ENCODE measurements at regions of chr6 and their contacts with region 1.

Region 1: DNA sequence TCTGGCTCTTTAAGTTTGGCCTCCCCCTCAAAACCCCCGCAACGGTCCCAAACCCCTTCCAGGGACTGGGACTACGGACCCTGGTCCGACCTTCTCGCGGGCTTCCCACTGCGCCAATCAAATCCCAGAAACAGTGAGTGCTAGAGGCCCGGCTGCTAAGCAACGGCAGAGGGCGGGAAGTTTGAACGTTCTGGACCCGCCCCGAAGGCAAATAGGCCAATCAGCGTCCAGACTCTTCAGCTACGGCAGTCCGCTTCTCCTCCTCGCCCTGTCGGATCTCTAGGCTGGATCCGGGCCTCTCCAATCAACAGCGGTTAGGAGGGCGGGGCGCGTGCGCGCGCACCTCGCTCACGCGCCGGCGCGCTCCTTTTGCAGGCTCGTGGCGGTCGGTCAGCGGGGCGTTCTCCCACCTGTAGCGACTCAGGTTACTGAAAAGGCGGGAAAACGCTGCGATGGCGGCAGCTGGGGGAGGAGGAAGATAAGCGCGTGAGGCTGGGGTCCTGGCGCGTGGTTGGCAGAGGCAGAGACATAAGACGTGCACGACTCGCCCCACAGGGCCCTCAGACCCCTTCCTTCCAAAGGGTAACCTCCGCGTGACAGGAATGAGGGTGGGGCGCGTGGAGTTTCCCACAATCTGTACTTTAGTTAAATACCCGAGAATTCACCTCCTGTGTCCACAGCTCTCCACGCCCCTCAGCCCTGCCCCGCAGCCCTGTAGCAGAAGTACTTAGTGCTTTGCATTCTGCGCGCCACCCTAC is at the start of gene MSH5:
- DNase-seq: peak; percentile 100
- ATAC-seq: peak; percentile 74
- H3K4me3 ChIP-seq: peak within 1 kb of the TSS; percentile 44 to 92 (median 92)
- H3K27ac ChIP-seq: peak within 1 kb of the TSS; percentile 99
- H3K4me1 ChIP-seq: peaks cover 50% of the 10 kb centered on the region
- H3K27me3 ChIP-seq: no peaks in the 10 kb centered on the region; a peak in 1 of 5 replicates
- CTCF ChIP-seq: no peak
- EP300 ChIP-seq: no peak; a peak in 1 of 4 replicates
- POLR2A ChIP-seq: peak in 1 of 2 experiments; percentile 45; a peak in 2 of 4 replicates
- RAD21 ChIP-seq: peak; percentile 51
- total RNA-seq, gene MSH5: 2.5 and 10.2 TPM in 2 replicates

Region 2: GRCh38 chr6:31304683-31305082 is 435.1 kb before region 1 on chr6:
- CTCF ChIA-PET with region 1: no interaction called
- POLR2A ChIA-PET with region 1: no interaction called
- in situ Hi-C with region 1: no loop called
- intact Hi-C with region 1: no loop called
- DNase-seq: no peak
- ATAC-seq: no peak
- H3K4me3 ChIP-seq: no peak overlapping the region
- H3K27ac ChIP-seq: no peak overlapping the region
- H3K4me1 ChIP-seq: peaks cover 11% of the 10 kb centered on the region
- H3K27me3 ChIP-seq: peaks cover 1 to 30% of the 10 kb centered on the region in 2 experiments; a peak in 4 of 5 replicates
- CTCF ChIP-seq: no peak
- EP300 ChIP-seq: no peak
- POLR2A ChIP-seq: no peak
- RAD21 ChIP-seq: no peak

Region 3: GRCh38 chr6:31660381-31661261 is 79.2 kb before region 1 on chr6 and contains the start of gene C6orf47:
- CTCF ChIA-PET with region 1: no interaction called
- POLR2A ChIA-PET with region 1: interaction called, 67 read pairs
- in situ Hi-C with region 1: no loop called
- intact Hi-C with region 1: loop called (anchors 1 kb)
- DNase-seq: peak; percentile 79
- ATAC-seq: peak; percentile 66
- H3K4me3 ChIP-seq: peak within 1 kb of the TSS; percentile 56 to 78 (median 68)
- H3K27ac ChIP-seq: peak within 1 kb of the TSS; percentile 73
- H3K4me1 ChIP-seq: peaks cover 86% of the 10 kb centered on the region
- H3K27me3 ChIP-seq: no peaks in the 10 kb centered on the region; a peak in 1 of 5 replicates
- CTCF ChIP-seq: no peak; the same call in 1 of the 2 replicates
- EP300 ChIP-seq: no peak
- POLR2A ChIP-seq: peak in 1 of 2 experiments; percentile 59; a peak in 1 of 4 replicates
- RAD21 ChIP-seq: peak; percentile 36; the same call in 1 of the 2 replicates
- total RNA-seq, gene C6orf47: 15.5 and 18.1 TPM in 2 replicates

Region 4: GRCh38 chr6:31712296-31712695 is 27.5 kb before region 1 on chr6:
- CTCF ChIA-PET with region 1: no interaction called
- POLR2A ChIA-PET with region 1: interaction called, 11 read pairs
- in situ Hi-C with region 1: no loop called
- intact Hi-C with region 1: no loop called
- DNase-seq: no peak
- ATAC-seq: no peak; the same call in 2 of the 3 replicates
- H3K4me3 ChIP-seq: no peak overlapping the region
- H3K27ac ChIP-seq: no peak overlapping the region
- H3K4me1 ChIP-seq: peaks cover 27% of the 10 kb centered on the region
- H3K27me3 ChIP-seq: peaks cover 11 to 47% of the 10 kb centered on the region in 2 experiments; a peak in 4 of 5 replicates
- CTCF ChIP-seq: no peak
- EP300 ChIP-seq: no peak
- POLR2A ChIP-seq: no peak
- RAD21 ChIP-seq: no peak

Region 5: GRCh38 chr6:31763619-31763940 is 23.8 kb after region 1 on chr6:
- CTCF ChIA-PET with region 1: no interaction called
- POLR2A ChIA-PET with region 1: interaction called, 279 read pairs
- in situ Hi-C with region 1: no loop called
- intact Hi-C with region 1: no loop called
- DNase-seq: peak; percentile 68
- ATAC-seq: peak; percentile 10
- H3K4me3 ChIP-seq: no peak overlapping the region
- H3K27ac ChIP-seq: no peak overlapping the region
- H3K4me1 ChIP-seq: peaks cover 47% of the 10 kb centered on the region
- H3K27me3 ChIP-seq: no peaks in the 10 kb centered on the region
- CTCF ChIP-seq: peak; percentile 77
- EP300 ChIP-seq: no peak
- POLR2A ChIP-seq: no peak
- RAD21 ChIP-seq: no peak

Region 6: DNA sequence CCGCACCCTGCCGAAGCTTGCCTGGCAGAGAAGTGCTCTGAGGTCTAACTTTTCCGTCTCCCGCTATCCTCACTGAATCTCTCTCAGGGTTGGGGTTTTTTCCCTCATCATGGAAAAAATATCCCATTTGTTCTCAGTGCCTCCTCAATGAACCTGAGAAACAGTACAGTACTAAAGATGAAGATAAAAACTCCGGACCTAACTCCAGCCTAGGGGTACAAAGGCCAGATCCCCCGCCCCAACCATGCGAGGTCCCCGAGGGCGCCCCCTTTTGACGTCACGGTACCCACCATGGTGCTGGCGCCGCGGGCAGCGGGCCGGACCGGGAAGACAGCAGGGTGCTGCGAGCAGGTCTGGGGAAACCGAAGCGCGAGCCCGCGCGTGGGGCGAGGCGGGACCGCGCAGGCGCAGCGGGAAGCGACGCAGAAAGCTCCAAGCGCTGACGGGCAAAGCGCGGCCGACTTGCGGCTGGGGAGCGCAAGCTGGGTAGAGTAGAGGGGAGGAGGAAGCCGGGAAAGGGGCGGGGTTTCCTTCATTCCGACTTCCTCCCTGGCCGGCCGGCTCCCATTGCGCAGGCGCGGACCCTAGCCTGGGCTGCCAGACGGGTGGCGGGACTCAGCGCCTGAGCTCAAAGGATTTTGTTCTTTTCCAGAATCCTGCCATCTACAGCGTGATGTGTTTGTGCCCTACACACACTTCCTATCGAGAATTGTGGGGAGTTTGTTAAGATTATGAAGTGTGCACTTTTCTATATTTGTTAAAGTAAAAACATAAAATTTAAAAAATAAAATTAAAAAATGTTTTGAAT is 66.9 kb after region 1 on chr6 and contains the start of gene LSM2:
- CTCF ChIA-PET with region 1: no interaction called
- POLR2A ChIA-PET with region 1: interaction called, 53 read pairs
- in situ Hi-C with region 1: no loop called
- intact Hi-C with region 1: loop called (anchors 5 kb)
- DNase-seq: peak; percentile 96
- ATAC-seq: peak; percentile 92
- H3K4me3 ChIP-seq: peak within 1 kb of the TSS; percentile 82 to 90 (median 84)
- H3K27ac ChIP-seq: peak within 1 kb of the TSS; percentile 94
- H3K4me1 ChIP-seq: peaks cover 37% of the 10 kb centered on the region
- H3K27me3 ChIP-seq: no peaks in the 10 kb centered on the region
- CTCF ChIP-seq: peak; percentile 89
- EP300 ChIP-seq: peak in 1 of 2 experiments; percentile 43; a peak in 2 of 4 replicates
- POLR2A ChIP-seq: peak; percentile 75 to 89
- RAD21 ChIP-seq: peak; percentile 69
- total RNA-seq, gene LSM2: 90.5 and 93.7 TPM in 2 replicates

Region 7: DNA sequence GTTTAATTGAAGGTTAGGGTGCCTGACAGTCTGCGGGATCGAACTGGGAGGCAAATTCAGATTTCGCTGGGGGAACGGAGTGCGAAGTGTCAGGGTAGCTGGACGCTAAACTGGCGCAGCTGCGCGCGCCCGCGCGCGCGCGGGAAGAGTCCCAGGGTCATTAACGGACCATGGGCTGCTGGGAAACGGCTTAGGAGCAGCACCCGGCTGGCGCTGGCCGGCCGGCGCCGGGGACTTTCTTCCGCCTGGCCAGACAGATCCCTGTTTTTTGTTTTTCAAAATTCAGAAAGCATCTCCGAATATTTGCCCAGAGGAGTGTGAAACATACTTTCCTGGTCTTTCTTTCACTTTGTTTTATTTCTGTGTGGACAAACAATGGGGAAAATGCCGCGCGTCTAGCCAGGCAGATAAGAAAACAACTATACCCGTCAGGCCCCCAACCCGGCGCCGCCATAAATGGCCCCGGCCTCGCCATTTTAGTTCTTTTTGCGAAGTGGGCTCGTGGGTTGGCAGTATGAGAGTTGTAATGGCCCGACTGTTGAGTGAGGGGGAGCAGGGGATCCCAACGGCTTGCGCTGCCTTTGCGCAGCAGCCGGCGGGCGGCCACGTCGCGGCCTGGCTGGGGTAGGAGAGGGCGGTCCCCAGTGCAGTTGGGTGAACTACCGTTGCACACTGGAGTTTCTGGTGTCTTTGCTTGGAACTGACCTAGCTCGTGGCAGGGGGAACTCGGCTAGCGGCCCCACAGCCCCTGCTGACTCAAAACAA is 94.8 kb after region 1 on chr6:
- CTCF ChIA-PET with region 1: no interaction called
- POLR2A ChIA-PET with region 1: interaction called, 60 read pairs
- in situ Hi-C with region 1: no loop called
- intact Hi-C with region 1: loop called (anchors 2 kb)
- DNase-seq: peak; percentile 92
- ATAC-seq: peak; percentile 85
- H3K4me3 ChIP-seq: peak overlapping the region; percentile 75 to 98 (median 93)
- H3K27ac ChIP-seq: peak overlapping the region; percentile 93
- H3K4me1 ChIP-seq: peaks cover 56% of the 10 kb centered on the region
- H3K27me3 ChIP-seq: peaks cover 0 to 2% of the 10 kb centered on the region in 2 experiments; a peak in 1 of 5 replicates
- CTCF ChIP-seq: no peak
- EP300 ChIP-seq: no peak
- POLR2A ChIP-seq: peak; percentile 97 to 99
- RAD21 ChIP-seq: peak; percentile 28; the same call in 1 of the 2 replicates

Region 8: GRCh38 chr6:31945507-31946369 is 205.9 kb after region 1 on chr6 and contains the start of gene CFB:
- CTCF ChIA-PET with region 1: no interaction called
- POLR2A ChIA-PET with region 1: interaction called, 21 read pairs
- in situ Hi-C with region 1: no loop called
- intact Hi-C with region 1: no loop called
- DNase-seq: peak; percentile 100
- ATAC-seq: peak; percentile 95
- H3K4me3 ChIP-seq: peak within 1 kb of the TSS; percentile 59 to 90 (median 66)
- H3K27ac ChIP-seq: peak within 1 kb of the TSS; percentile 91
- H3K4me1 ChIP-seq: peaks cover 85% of the 10 kb centered on the region
- H3K27me3 ChIP-seq: no peaks in the 10 kb centered on the region; a peak in 1 of 5 replicates
- CTCF ChIP-seq: peak; percentile 8; the same call in 1 of the 2 replicates
- EP300 ChIP-seq: peak; percentile 89 to 94; a peak in 3 of 4 replicates
- POLR2A ChIP-seq: peak in 1 of 2 experiments; percentile 96; a peak in 2 of 4 replicates
- RAD21 ChIP-seq: peak; percentile 40
- total RNA-seq, gene CFB: 71.1 and 171 TPM in 2 replicates

Measured in HepG2 (cell line).